MCF 10A (cell line): ENCODE measurements at regions of chr1 and their contacts with region 1.

Region 1: GRCh38 chr1:39258146-39258924 is 53.8 kb downstream of the MACF1 start:
- DNase-seq: peak; percentile 75
- H3K4me3 Mint-ChIP-seq: no peak overlapping the region
- H3K27ac Mint-ChIP-seq: peak overlapping the region; percentile 41
- H3K4me1 Mint-ChIP-seq: peaks cover 10% of the 10 kb centered on the region
- H3K27me3 Mint-ChIP-seq: no peaks in the 10 kb centered on the region
- CTCF ChIP-seq: peak; percentile 86

Region 2: GRCh38 chr1:39132505-39133339 is 125.6 kb before region 1 on chr1:
- CTCF ChIA-PET with region 1: interaction called, 12 read pairs
- POLR2A ChIA-PET with region 1: interaction called, 3 read pairs
- intact Hi-C with region 1: loop called (anchors 1 kb)
- DNase-seq: peak; percentile 77
- H3K4me3 Mint-ChIP-seq: peak overlapping the region; percentile 10
- H3K27ac Mint-ChIP-seq: peak overlapping the region; percentile 85
- H3K4me1 Mint-ChIP-seq: peaks cover 52% of the 10 kb centered on the region
- H3K27me3 Mint-ChIP-seq: no peaks in the 10 kb centered on the region
- CTCF ChIP-seq: peak; percentile 14

Region 3: DNA sequence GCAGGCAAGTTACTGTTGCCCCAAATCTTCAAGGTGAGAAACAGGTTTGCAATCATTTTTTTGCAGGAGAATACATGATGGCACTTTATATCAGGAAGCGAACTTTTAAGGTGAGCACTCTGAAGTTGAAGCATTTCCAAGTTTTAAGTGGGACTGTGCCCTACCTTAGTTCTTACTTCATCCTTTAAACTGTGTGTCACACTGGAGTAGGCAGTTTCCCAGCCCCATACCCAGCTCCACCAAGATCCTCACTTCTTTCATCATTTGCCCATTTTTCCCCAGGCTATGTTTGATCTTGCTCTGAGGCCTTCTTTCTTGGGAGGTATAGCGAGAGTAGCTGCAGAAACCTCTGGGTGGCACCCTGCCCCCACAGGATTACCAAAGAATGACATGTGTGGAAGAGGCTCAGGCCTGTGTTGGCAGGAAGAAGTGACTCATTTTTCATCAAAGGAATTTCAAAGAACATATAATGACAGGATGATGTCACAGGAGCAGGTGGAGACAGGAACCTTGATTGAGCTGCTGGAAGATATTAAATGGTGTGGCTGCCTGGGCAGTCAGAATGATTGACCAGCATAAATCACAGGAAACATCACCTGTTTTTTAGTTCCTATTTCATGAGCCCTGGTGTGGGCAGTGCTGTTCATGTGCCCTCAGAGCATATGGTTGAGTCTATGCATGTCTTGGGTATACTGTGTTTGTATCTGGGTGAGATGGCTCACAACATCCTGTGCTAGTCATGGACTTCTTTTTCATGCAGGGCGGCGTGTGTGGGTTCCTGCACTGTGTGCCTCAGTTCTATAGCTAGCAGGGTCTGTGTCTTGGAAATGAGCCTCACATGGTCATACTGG is 74.6 kb before region 1 on chr1:
- CTCF ChIA-PET with region 1: interaction called, 13 read pairs
- POLR2A ChIA-PET with region 1: interaction called, 13 read pairs
- intact Hi-C with region 1: no loop called
- DNase-seq: peak; percentile 98
- H3K4me3 Mint-ChIP-seq: peak overlapping the region; percentile 53
- H3K27ac Mint-ChIP-seq: peak overlapping the region; percentile 88
- H3K4me1 Mint-ChIP-seq: peaks cover 52% of the 10 kb centered on the region
- H3K27me3 Mint-ChIP-seq: no peaks in the 10 kb centered on the region
- CTCF ChIP-seq: peak; percentile 29

Region 4: GRCh38 chr1:39189592-39190041 is 68.7 kb before region 1 on chr1:
- CTCF ChIA-PET with region 1: interaction called, 141 read pairs
- POLR2A ChIA-PET with region 1: interaction called, 54 read pairs
- intact Hi-C with region 1: loop called (anchors 1 kb)
- DNase-seq: no peak
- H3K4me3 Mint-ChIP-seq: no peak overlapping the region
- H3K27ac Mint-ChIP-seq: peak overlapping the region; percentile 96
- H3K4me1 Mint-ChIP-seq: peaks cover 56% of the 10 kb centered on the region
- H3K27me3 Mint-ChIP-seq: no peaks in the 10 kb centered on the region
- CTCF ChIP-seq: no peak

Region 5: GRCh38 chr1:39204441-39205081 is 53.8 kb before region 1 on chr1 and contains the start of gene MACF1:
- CTCF ChIA-PET with region 1: interaction called, 19 read pairs
- POLR2A ChIA-PET with region 1: interaction called, 5 read pairs
- intact Hi-C with region 1: no loop called
- DNase-seq: peak; percentile 76
- H3K4me3 Mint-ChIP-seq: peak within 1 kb of the TSS; percentile 49
- H3K27ac Mint-ChIP-seq: peak within 1 kb of the TSS; percentile 93
- H3K4me1 Mint-ChIP-seq: peaks cover 34% of the 10 kb centered on the region
- H3K27me3 Mint-ChIP-seq: no peaks in the 10 kb centered on the region
- CTCF ChIP-seq: peak; percentile 13
- total RNA-seq, gene MACF1: 188 and 197 TPM in 2 replicates

Region 6: DNA sequence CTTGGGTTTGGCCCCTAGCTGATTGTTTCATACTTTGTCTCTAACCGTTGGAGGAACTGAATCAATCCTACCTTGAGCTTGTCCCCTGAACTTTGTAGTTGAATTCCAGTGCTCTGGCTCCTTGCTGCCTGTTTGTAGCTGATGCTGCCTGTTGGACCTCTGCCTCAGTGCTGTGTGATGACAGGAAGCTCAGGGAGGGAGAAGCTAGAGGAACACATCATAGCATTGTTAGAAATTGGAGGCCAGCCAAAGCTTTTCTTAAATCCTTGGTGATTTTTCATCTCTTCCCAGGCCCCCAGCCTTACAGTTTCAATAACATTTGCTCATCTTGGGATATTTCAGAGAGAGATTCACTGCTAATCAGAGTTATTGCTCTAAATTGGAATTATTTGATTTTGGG is 19.9 kb before region 1 on chr1:
- CTCF ChIA-PET with region 1: interaction called, 15 read pairs
- POLR2A ChIA-PET with region 1: interaction called, 3 read pairs
- intact Hi-C with region 1: no loop called
- DNase-seq: peak; percentile 22
- H3K4me3 Mint-ChIP-seq: no peak overlapping the region
- H3K27ac Mint-ChIP-seq: no peak overlapping the region
- H3K4me1 Mint-ChIP-seq: peaks cover 9% of the 10 kb centered on the region
- H3K27me3 Mint-ChIP-seq: no peaks in the 10 kb centered on the region
- CTCF ChIP-seq: no peak

Region 7: GRCh38 chr1:39275836-39276507 is 17.6 kb after region 1 on chr1:
- CTCF ChIA-PET with region 1: interaction called, 13 read pairs
- POLR2A ChIA-PET with region 1: interaction called, 5 read pairs
- intact Hi-C with region 1: no loop called
- DNase-seq: peak; percentile 56
- H3K4me3 Mint-ChIP-seq: no peak overlapping the region
- H3K27ac Mint-ChIP-seq: no peak overlapping the region
- H3K4me1 Mint-ChIP-seq: peaks cover 36% of the 10 kb centered on the region
- H3K27me3 Mint-ChIP-seq: no peaks in the 10 kb centered on the region
- CTCF ChIP-seq: no peak

Region 8: DNA sequence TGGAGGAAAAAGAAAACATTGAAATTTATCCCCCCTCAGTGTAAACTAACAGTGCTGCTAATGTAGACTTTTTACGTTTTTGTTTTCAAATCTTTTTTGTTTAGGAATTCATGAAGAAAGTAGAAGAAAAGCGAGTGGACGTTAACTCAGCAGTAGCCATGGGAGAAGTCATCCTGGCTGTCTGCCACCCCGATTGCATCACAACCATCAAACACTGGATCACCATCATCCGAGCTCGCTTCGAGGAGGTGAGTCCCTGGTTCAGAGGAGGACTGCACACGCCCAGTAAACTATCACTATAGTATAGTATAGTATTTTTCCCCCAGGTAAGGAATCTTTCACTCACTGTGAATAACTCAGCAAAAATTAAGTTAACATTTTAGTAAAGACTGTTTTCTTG is 195.3 kb after region 1 on chr1:
- CTCF ChIA-PET with region 1: no interaction called
- POLR2A ChIA-PET with region 1: no interaction called
- intact Hi-C with region 1: no loop called
- DNase-seq: peak; percentile 88
- H3K4me3 Mint-ChIP-seq: no peak overlapping the region
- H3K27ac Mint-ChIP-seq: no peak overlapping the region
- H3K4me1 Mint-ChIP-seq: no peaks in the 10 kb centered on the region
- H3K27me3 Mint-ChIP-seq: no peaks in the 10 kb centered on the region
- CTCF ChIP-seq: no peak